ENCODE measurements at regions of chr1 and their contacts with region 1.

Region 1: GRCh38 chr1:3727042-3727824 is 25.0 kb upstream of the CCDC27 start:
- DNase-seq: peak; percentile 78
- H3K4me3 ChIP-seq: no peak overlapping the region
- H3K27ac ChIP-seq: no peak overlapping the region
- H3K4me1 ChIP-seq: peaks cover 0 to 13% of the 10 kb centered on the region in 2 experiments; a peak in 1 of 4 replicates
- H3K27me3 ChIP-seq: no peaks in the 10 kb centered on the region
- CTCF ChIP-seq: peak; percentile 34
- EP300 ChIP-seq: no peak
- RAD21 ChIP-seq: peak; percentile 50

Region 2: GRCh38 chr1:3631330-3632262 is 95.6 kb before region 1 on chr1:
- CTCF ChIA-PET with region 1: interaction called, 32 read pairs
- POLR2A ChIA-PET with region 1: no interaction called
- DNase-seq: no peak
- H3K4me3 ChIP-seq: no peak overlapping the region
- H3K27ac ChIP-seq: no peak overlapping the region; a peak in 1 of 4 replicates
- H3K4me1 ChIP-seq: peaks cover 0 to 19% of the 10 kb centered on the region in 2 experiments; a peak in 2 of 4 replicates
- H3K27me3 ChIP-seq: no peaks in the 10 kb centered on the region
- CTCF ChIP-seq: no peak
- EP300 ChIP-seq: no peak
- RAD21 ChIP-seq: no peak

Region 3: GRCh38 chr1:3657675-3658615 is 69.3 kb before region 1 on chr1:
- CTCF ChIA-PET with region 1: interaction called, 13 read pairs
- POLR2A ChIA-PET with region 1: no interaction called
- DNase-seq: no peak
- H3K4me3 ChIP-seq: no peak overlapping the region
- H3K27ac ChIP-seq: no peak overlapping the region
- H3K4me1 ChIP-seq: peaks cover 0 to 5% of the 10 kb centered on the region in 2 experiments; a peak in 1 of 4 replicates
- H3K27me3 ChIP-seq: peaks cover 4% of the 10 kb centered on the region; the same call in 1 of the 2 replicates
- CTCF ChIP-seq: no peak
- EP300 ChIP-seq: no peak
- RAD21 ChIP-seq: no peak

Region 4: DNA sequence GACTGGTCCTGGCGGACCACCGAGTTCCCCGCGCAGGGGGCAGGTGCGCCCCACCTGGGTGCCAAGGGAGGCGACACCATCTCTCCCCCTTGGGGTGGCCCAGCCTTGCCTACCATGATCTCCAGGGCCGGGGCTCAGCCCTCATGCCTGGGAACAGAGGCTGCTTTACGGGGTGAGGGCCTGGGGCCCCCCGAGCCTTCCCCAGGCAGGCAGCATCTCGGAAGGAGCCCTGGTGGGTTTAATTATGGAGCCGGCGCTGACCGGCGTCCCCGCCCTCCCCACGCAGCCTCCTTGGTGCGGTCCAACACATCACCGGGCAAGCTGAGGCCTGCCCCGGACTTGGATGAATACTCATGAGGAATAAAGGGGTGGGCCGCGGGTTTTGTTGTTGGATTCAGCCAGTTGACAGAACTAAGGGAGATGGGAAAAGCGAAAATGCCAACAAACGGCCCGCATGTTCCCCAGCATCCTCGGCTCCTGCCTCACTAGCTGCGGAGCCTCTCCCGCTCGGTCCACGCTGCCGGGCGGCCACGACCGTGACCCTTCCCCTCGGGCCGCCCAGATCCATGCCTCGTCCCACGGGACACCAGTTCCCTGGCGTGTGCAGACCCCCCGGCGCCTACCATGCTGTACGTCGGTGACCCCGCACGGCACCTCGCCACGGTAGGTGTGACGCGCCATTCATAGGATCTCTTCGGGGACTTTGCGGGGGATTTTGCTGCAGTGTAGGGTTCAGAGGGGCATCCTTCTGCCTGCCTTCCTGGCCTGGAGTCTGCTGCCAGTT is 36.8 kb before region 1 on chr1:
- CTCF ChIA-PET with region 1: interaction called, 369 read pairs
- POLR2A ChIA-PET with region 1: no interaction called
- DNase-seq: no peak
- H3K4me3 ChIP-seq: no peak overlapping the region
- H3K27ac ChIP-seq: no peak overlapping the region
- H3K4me1 ChIP-seq: peaks cover 0 to 4% of the 10 kb centered on the region in 2 experiments; a peak in 1 of 4 replicates
- H3K27me3 ChIP-seq: no peaks in the 10 kb centered on the region
- CTCF ChIP-seq: no peak
- EP300 ChIP-seq: no peak
- RAD21 ChIP-seq: no peak

Region 5: GRCh38 chr1:3712573-3713535 is 14.4 kb before region 1 on chr1:
- CTCF ChIA-PET with region 1: interaction called, 85 read pairs
- POLR2A ChIA-PET with region 1: interaction called, 3 read pairs
- DNase-seq: peak; percentile 71
- H3K4me3 ChIP-seq: no peak overlapping the region
- H3K27ac ChIP-seq: peak overlapping the region in 1 of 2 experiments; percentile 78; a peak in 2 of 4 replicates
- H3K4me1 ChIP-seq: peaks cover 0 to 90% of the 10 kb centered on the region in 2 experiments; a peak in 2 of 4 replicates
- H3K27me3 ChIP-seq: no peaks in the 10 kb centered on the region
- CTCF ChIP-seq: no peak
- EP300 ChIP-seq: no peak
- RAD21 ChIP-seq: no peak

Region 6: DNA sequence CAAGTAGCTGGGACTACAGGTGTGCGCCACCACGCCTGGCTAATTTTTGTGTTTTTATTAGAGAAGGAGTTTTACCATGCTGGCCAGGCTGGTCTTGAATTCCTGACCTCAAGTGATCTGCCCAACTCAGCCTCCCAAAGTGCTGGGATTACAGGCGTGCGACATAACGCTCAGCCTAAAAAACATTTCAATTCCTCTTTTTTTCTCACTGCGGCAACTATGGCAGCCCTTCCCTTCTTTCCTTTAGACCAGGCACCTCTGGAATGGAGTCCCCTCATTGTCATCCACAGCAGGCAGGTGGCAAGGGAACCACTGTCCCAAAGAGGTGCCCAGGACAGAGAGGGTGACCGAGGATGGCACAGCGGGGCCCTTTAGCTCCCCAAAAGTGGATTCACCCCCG is 115.7 kb after region 1 on chr1:
- CTCF ChIA-PET with region 1: no interaction called
- POLR2A ChIA-PET with region 1: no interaction called
- DNase-seq: no peak
- H3K4me3 ChIP-seq: no peak overlapping the region
- H3K27ac ChIP-seq: no peak overlapping the region
- H3K4me1 ChIP-seq: no peaks in the 10 kb centered on the region
- H3K27me3 ChIP-seq: no peaks in the 10 kb centered on the region
- CTCF ChIP-seq: no peak
- EP300 ChIP-seq: no peak
- RAD21 ChIP-seq: no peak

Region 7: DNA sequence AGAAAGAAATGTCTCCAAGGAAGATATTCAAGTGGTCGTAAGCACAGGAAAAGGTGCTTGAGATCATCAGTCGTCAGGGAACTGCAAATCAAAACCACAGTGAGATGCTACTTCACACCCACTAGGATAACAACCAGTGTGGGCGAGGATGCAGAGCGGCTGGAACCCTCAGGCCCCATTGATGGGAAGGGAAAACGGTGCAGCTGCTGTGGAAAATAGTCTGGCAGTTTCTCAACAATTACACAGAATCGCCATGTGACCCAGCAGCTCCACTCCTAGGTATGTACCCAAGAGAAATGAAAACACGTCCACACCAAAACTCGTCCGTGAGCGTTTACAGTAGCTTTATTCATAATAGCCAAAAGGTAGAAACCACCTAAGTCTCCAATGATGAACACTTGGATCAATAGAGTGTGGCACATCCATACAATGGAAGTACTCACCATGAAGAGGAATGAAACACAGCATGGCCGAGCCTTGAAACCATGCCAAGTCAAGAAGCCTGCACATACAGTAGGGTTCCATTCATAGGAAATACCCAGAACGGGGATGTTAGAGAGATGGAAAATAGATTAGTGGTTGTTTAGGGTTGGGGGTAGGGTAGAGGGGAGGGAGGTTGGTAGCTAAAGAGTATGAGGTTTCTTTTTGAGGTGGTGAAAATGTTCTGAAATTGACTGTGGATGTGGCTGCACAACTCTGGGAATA is 136.2 kb after region 1 on chr1:
- CTCF ChIA-PET with region 1: no interaction called
- POLR2A ChIA-PET with region 1: no interaction called
- DNase-seq: no peak
- H3K4me3 ChIP-seq: no peak overlapping the region
- H3K27ac ChIP-seq: no peak overlapping the region
- H3K4me1 ChIP-seq: peaks cover 0 to 2% of the 10 kb centered on the region in 2 experiments; a peak in 1 of 4 replicates
- H3K27me3 ChIP-seq: no peaks in the 10 kb centered on the region
- CTCF ChIP-seq: no peak
- EP300 ChIP-seq: no peak
- RAD21 ChIP-seq: no peak

Region 8: GRCh38 chr1:3954170-3955169 is 227.2 kb after region 1 on chr1:
- CTCF ChIA-PET with region 1: no interaction called
- POLR2A ChIA-PET with region 1: no interaction called
- DNase-seq: no peak
- H3K4me3 ChIP-seq: no peak overlapping the region
- H3K27ac ChIP-seq: no peak overlapping the region
- H3K4me1 ChIP-seq: no peaks in the 10 kb centered on the region
- H3K27me3 ChIP-seq: no peaks in the 10 kb centered on the region
- CTCF ChIP-seq: no peak
- EP300 ChIP-seq: no peak
- RAD21 ChIP-seq: no peak

Measured in SK-N-SH (cell line).